Ovary (tissue), 10 donors: ENCODE measurements at regions of chr15 and their contacts with region 1.

Region 1: GRCh38 chr15:80081390-80081789 is 21.9 kb downstream of the ZFAND6 start:
- DNase-seq: no peak
- H3K4me3 ChIP-seq: no peak overlapping the region
- H3K27ac ChIP-seq: no peak overlapping the region
- H3K4me1 ChIP-seq: no peaks in the 10 kb centered on the region
- H3K27me3 ChIP-seq: no peaks in the 10 kb centered on the region
- CTCF ChIP-seq: no peak
- EP300 ChIP-seq: no peak
- POLR2A ChIP-seq: no peak

Region 2: DNA sequence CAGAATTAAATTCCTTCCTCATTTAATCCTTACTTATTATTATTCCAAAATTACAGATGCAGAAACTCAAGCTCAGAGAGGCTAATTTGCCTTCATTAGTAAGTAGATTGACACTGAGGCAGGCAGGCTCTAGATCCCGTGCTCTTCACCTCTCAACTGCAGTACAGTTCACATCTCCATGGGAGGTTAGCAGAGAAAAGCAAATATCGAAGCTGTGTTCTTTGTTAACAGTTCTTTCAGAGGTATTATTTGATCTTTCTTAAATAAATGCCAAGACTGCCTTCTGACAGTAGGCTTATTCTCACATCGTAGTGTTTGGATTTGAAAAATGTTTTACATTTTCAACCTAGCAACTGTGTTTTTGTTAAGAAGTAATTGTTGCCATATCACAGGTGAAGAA is 55.5 kb after region 1 on chr15:
- intact Hi-C with region 1: loop called in 1 of 4 experiments (anchors 10 kb)
- DNase-seq: no peak
- H3K4me3 ChIP-seq: no peak overlapping the region
- H3K27ac ChIP-seq: no peak overlapping the region
- H3K4me1 ChIP-seq: no peaks in the 10 kb centered on the region
- H3K27me3 ChIP-seq: no peaks in the 10 kb centered on the region
- CTCF ChIP-seq: no peak
- EP300 ChIP-seq: no peak
- POLR2A ChIP-seq: no peak

Region 3: GRCh38 chr15:80152180-80152845 is 70.9 kb after region 1 on chr15:
- intact Hi-C with region 1: no loop called
- DNase-seq: peak; percentile 96 to 99 (median 98)
- H3K4me3 ChIP-seq: peak overlapping the region; percentile 73
- H3K27ac ChIP-seq: peak overlapping the region; percentile 47 to 88
- H3K4me1 ChIP-seq: peaks cover 1% of the 10 kb centered on the region
- H3K27me3 ChIP-seq: no peaks in the 10 kb centered on the region
- CTCF ChIP-seq: no peak
- EP300 ChIP-seq: no peak
- POLR2A ChIP-seq: no peak